ENCODE measurements at regions of chr2 and their contacts with region 1.

Region 1: DNA sequence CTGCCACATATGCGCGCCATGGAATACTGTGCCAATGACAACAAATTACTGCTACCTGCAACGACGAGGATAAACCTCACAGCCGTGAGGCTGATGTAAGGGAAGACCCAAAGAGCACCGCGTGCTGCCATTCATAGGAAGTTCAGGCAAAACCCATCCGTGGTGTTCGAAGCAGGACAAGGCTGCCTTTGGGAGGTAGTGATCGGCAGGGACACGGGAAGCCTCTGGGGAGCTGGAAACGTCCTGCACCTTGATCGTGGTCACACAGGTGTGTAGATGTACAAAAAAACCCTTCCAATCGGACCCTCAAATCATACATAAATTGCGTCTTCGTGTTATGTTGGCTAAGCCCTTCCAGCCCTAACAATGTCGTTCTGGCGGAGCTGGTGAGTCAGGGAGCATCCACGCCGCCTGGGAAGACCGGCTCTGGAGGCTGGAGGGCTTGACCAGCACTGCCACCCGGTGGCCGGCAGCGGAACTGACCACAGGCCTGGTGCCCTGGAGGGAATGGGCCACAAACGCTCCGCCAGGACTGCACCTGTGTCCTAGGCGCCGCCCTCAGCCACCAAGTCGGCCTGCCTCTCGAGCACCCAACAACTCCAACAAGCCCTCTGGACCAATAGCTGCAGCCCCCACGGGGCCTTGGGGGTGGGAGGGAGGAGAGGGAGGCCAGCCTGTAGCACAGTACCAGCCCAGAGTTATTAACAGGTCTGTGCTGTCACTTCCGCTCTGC is 4.1 kb upstream of the NEURL3 start:
- DNase-seq: peak; percentile 80 to 94 (median 87)
- H3K4me3 ChIP-seq: peak overlapping the region in 15 of 59 donors; percentile 1 to 74 (median 26)
- H3K27ac ChIP-seq: peak overlapping the region in 13 of 59 donors; percentile 3 to 68 (median 28)
- H3K27me3 ChIP-seq: no peaks in the 10 kb centered on the region
- CTCF ChIP-seq: peak; percentile 91 to 100 (median 99)

Region 2: DNA sequence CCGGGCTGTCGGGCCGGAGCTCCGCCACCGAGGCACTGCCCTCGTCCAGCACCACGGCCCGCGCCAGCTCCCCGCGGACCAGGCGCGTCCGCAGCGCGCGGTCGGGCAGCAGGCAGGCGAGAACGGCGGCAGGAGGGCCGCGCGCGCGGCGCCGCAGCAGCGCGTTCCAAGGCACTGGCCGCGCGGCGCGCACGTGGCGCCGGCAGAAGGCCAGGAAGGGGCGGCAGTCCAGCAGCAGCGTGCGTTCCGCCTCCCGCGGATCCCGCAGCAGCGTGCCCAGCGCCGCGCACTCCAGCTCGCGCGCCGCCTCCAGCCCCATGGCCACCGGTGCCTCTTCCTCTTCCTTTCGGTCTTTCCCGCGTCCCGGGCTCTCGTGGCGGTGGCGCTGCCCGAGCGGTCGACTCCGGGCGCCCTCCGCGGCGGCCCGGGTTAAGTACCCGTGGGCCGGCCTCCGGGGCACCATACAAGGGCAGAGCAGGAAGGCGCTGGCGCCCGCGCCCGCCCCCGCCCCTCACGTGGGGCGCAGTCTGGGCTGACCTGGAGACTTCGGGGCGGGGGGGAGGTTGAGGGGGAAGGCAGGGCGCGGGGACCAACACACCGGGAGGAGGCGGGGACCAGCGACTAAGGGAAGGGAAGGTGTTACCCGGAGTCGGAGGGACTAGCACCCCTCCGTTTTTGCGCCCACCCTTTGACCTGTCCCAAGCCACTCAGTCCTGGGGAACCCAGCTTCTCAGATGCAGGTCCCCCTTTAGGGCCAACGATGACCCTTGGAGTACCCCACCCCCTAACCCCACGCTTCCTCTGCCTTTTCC is 364.0 kb before region 1 on chr2 and contains the start of gene DUSP2:
- intact Hi-C with region 1: loop called in 1 of 2 experiments (anchors 10 kb)
- DNase-seq: peak in 8 of 10 donors; percentile 43 to 80 (median 59)
- H3K4me3 ChIP-seq: peak within 1 kb of the TSS; percentile 36 to 77 (median 64)
- H3K27ac ChIP-seq: peak within 1 kb of the TSS in 53 of 59 donors; percentile 3 to 84 (median 66)
- H3K27me3 ChIP-seq: no peaks in the 10 kb centered on the region
- CTCF ChIP-seq: peak in 13 of 56 donors; percentile 10 to 29 (median 21)
- total RNA-seq, gene DUSP2: 2.9 to 109 (median 7.5) TPM

Region 3: DNA sequence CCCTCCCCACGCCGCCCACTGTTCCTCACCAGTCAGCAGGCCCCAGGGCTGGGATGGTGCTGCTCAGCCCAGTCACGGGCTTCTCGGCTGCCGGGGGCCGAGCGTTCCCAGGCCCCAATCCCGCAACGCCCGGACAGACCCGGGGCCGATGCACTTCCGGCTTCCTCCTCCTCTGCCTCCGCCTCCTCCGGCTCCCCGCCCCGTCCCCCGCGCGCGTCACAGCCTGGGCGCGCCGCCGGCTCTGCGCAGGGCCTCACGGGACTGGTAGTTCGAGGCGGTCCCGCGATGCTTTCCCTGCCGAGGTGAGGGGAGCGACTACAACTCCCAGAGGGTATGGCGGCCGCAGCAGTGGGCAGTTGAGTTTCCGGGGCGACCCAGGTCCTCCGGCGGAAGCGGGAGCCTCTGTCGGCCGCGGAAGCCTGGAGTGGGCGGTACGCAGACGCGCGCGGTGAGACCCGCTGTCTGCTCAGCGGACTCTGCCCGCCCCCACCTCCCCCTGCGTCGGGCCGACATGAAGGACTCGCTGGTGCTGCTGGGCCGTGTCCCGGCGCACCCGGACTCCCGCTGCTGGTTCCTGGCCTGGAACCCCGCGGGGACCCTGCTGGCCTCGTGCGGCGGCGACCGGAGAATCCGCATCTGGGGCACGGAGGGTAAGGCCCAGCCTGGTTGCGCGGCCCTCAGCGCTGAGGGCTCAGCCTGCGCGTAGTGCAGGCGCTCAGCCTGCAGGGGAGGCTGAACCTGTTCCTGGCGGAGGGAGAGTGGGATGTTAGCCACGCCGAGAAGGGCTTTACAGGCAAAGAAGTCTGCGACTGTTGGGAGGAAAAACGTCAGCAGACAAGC is 243.2 kb before region 1 on chr2 and contains the starts of genes CIAO1 and TMEM127:
- intact Hi-C with region 1: loop called in 1 of 2 experiments (anchors 2 kb)
- DNase-seq: peak; percentile 96 to 100 (median 99)
- H3K4me3 ChIP-seq: peak within 1 kb of the TSS; percentile 75 to 100 (median 94)
- H3K27ac ChIP-seq: peak within 1 kb of the TSS in 58 of 59 donors; percentile 55 to 96 (median 87)
- H3K27me3 ChIP-seq: no peaks in the 10 kb centered on the region
- CTCF ChIP-seq: peak in 48 of 56 donors; percentile 1 to 68 (median 42)
- total RNA-seq, gene CIAO1: 71.3 to 116 (median 96.1) TPM
- total RNA-seq, gene TMEM127: 33.5 to 77.9 (median 59.2) TPM

Region 4: GRCh38 chr2:96305091-96305978 is 203.9 kb before region 1 on chr2 and contains the start of gene SNRNP200:
- intact Hi-C with region 1: loop called in 1 of 2 experiments (anchors 5 kb)
- DNase-seq: peak; percentile 83 to 94 (median 90)
- H3K4me3 ChIP-seq: peak within 1 kb of the TSS; percentile 63 to 100 (median 86)
- H3K27ac ChIP-seq: peak within 1 kb of the TSS in 54 of 59 donors; percentile 14 to 94 (median 74)
- H3K27me3 ChIP-seq: no peaks in the 10 kb centered on the region
- CTCF ChIP-seq: peak in 30 of 56 donors; percentile 6 to 51 (median 25)
- total RNA-seq, gene SNRNP200: 76.1 to 117 (median 91.0) TPM

Region 5: GRCh38 chr2:96320728-96321622 is 188.3 kb before region 1 on chr2:
- intact Hi-C with region 1: loop called in 1 of 2 experiments (anchors 10 kb)
- DNase-seq: peak in 3 of 10 donors; percentile 53 to 65 (median 57)
- H3K4me3 ChIP-seq: peak overlapping the region; percentile 39 to 89 (median 67)
- H3K27ac ChIP-seq: peak overlapping the region in 39 of 59 donors; percentile 1 to 84 (median 36)
- H3K27me3 ChIP-seq: peaks cover 0 to 61% (median 10%) of the 10 kb centered on the region in 45 donors
- CTCF ChIP-seq: no peak

Region 6: DNA sequence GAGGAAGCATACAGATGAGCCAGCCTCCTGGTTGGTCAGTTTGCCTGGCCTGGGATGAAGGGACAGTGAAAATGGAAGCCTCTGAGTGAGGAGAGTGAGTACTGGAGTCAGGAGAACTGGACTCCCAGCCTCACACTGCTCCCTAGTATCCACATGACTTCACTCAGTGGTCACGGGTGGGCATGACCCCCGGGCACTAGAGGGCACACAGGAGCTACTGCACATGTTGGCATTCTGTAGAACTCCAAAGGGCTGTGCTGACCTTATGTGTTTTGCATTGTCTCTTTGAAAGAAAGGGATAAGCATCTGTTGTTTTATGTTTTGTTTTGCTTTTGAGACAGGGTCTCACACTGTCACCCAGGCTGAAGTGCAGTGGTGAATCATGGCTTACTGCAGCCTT is 150.0 kb before region 1 on chr2:
- intact Hi-C with region 1: loop called (anchors 1 to 5 kb)
- DNase-seq: peak in 9 of 10 donors; percentile 63 to 87 (median 74)
- H3K4me3 ChIP-seq: no peak overlapping the region
- H3K27ac ChIP-seq: peak overlapping the region in 13 of 59 donors; percentile 10 to 58 (median 33)
- H3K27me3 ChIP-seq: no peaks in the 10 kb centered on the region
- CTCF ChIP-seq: peak in 54 of 56 donors; percentile 24 to 82 (median 64)

Measured in dorsolateral prefrontal cortex (tissue), 120 donors.